Naive thymus-derived CD8-positive, alpha-beta T cell (primary cell): ENCODE measurements at regions of chr11 and their contacts with region 1.

Region 1: GRCh38 chr11:116787786-116788486 is at the start of gene ZPR1:
- DNase-seq: peak; percentile 71 to 91 (median 84)
- ATAC-seq: peak; percentile 84 to 87
- H3K4me3 Mint-ChIP-seq: peak within 1 kb of the TSS; percentile 75 to 99 (median 97)
- H3K27ac Mint-ChIP-seq: peak within 1 kb of the TSS; percentile 86 to 100 (median 98)
- H3K4me1 Mint-ChIP-seq: peaks cover 20 to 56% (median 44%) of the 10 kb centered on the region in 4 donors
- H3K27me3 Mint-ChIP-seq: peaks cover 0 to 5% (median 0%) of the 10 kb centered on the region in 5 donors
- polyA plus RNA-seq, gene ZPR1: 29.5 to 42.9 (median 36.1) TPM

Region 2: DNA sequence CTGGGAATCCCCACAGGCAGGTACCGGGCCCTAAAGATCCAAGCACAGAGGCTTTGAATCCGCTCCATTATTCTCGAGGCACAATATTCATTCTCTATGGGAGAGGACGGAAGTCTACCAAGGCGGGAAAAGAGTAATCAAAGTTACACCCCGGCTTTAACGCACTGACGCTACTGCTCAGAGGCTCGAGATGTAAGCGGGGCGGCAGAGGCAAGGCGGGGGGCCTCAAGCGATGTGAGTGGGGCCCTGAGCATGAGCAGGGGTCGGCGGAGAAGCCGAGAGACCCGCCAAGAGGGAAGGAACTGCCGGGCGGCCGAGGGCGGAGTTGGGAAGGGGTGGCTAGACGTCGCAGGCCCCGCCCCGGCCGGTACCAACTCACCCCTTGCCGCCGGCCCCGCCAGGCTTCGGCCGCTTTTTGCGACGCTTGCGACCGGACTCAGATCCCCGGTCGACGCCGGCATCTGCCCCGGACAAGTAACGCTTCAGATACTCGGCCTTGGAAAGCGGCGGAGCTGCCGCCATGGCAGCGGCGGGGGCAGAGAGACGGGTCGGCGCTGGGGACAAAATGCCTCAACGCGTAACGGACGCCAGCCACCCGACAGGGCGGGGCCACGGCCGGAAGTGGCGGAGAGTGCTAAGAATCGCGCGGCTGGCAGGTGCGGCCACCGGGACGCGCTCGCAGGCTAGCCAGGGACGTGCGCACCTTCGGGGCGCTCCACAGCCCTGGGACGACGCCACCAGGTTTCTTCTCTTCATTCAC is 15.3 kb before region 1 on chr11 and contains the start of gene BUD13:
- POLR2A ChIA-PET with region 1: interaction called, 66 read pairs
- DNase-seq: peak; percentile 84 to 99 (median 94)
- ATAC-seq: peak; percentile 91 to 92
- H3K4me3 Mint-ChIP-seq: peak within 1 kb of the TSS; percentile 84 to 99 (median 98)
- H3K27ac Mint-ChIP-seq: peak within 1 kb of the TSS; percentile 93 to 99 (median 97)
- H3K4me1 Mint-ChIP-seq: peaks cover 17 to 46% (median 42%) of the 10 kb centered on the region in 4 donors
- H3K27me3 Mint-ChIP-seq: no peaks in the 10 kb centered on the region
- polyA plus RNA-seq, gene BUD13: 5.4 to 16.2 (median 6.6) TPM

Region 3: GRCh38 chr11:116835791-116836631 is 48.1 kb after region 1 on chr11:
- POLR2A ChIA-PET with region 1: interaction called, 29 read pairs
- DNase-seq: peak; percentile 71 to 89 (median 80)
- ATAC-seq: peak; percentile 92 to 96
- H3K4me3 Mint-ChIP-seq: peak overlapping the region; percentile 66 to 88 (median 82)
- H3K27ac Mint-ChIP-seq: peak overlapping the region in 8 of 10 donors; percentile 60 to 91 (median 80)
- H3K4me1 Mint-ChIP-seq: peaks cover 5 to 18% (median 15%) of the 10 kb centered on the region in 4 donors
- H3K27me3 Mint-ChIP-seq: no peaks in the 10 kb centered on the region

Region 4: DNA sequence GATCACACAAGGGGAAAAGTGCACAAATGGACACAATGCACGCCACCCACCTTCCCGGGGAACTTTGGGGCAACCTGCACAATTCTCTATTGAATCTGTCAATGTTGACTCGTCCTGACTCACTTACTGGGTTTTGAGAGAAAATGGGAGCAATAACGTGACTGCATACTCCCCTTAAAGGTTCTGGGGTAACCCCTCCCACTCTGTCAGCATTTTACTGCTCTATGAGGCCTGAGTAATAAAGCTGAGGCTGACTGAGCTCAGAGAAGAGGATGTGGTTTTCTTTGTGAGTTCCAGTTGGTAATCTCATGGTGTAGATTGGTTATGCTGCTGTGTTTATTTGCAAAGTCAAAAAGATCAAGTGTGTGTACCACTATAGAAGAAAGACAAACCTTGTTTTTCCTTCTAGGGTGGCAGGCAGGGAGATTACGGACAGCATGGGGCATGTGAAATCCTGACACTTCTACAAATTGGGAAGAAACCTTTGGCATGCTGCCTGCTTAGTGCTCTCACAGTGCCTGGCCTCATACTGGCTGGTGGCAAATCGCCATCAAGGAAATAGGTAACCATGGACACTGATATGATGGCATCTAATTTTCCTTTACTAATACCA is 65.6 kb after region 1 on chr11:
- POLR2A ChIA-PET with region 1: interaction called, 14 read pairs
- DNase-seq: peak in 9 of 10 donors; percentile 32 to 84 (median 68)
- ATAC-seq: peak; percentile 95 to 96
- H3K4me3 Mint-ChIP-seq: peak overlapping the region; percentile 49 to 87 (median 64)
- H3K27ac Mint-ChIP-seq: peak overlapping the region; percentile 10 to 89 (median 84)
- H3K4me1 Mint-ChIP-seq: peaks cover 41 to 77% (median 74%) of the 10 kb centered on the region in 4 donors
- H3K27me3 Mint-ChIP-seq: no peaks in the 10 kb centered on the region